ENCODE measurements at regions of chr19 and their contacts with region 1.

Region 1: DNA sequence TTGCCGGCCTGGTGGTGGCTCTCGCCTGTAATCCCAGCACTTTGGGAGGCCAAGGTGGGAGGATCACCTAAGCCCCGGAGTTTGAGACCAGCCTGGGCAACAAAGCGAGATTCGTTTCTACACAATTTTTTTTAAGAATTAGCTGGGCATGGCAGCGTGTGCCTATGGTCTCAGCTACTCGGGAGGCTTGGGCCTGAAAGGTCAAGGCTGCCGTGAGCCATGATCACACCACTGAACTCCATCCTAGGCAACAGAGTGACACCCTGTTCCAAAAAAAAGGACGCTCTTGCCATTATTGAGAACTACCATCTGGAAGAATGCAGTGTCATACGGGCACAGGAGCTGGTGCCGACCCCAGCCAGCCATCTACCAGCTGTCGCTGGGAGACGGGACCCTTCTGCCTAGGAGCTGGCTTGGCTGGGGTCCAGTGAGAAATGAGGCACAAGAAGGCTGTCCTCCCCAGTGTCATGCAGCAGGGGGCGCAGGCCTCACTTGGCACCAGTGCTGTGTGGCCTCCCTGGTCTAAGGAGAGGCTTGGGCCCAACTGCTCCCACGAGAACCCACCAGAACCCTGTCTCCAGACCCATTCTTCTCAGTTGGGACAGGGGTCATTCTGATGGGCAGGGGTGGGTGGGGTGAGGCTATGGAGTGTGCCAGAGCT is 12.2 kb upstream of the RELB start:
- DNase-seq: peak; percentile 86
- ATAC-seq: peak; percentile 91
- H3K4me3 Mint-ChIP-seq: no peak overlapping the region
- H3K27ac Mint-ChIP-seq: no peak overlapping the region
- H3K4me1 Mint-ChIP-seq: no peaks in the 10 kb centered on the region
- H3K27me3 Mint-ChIP-seq: no peaks in the 10 kb centered on the region
- CTCF ChIP-seq: peak; percentile 73

Region 2: DNA sequence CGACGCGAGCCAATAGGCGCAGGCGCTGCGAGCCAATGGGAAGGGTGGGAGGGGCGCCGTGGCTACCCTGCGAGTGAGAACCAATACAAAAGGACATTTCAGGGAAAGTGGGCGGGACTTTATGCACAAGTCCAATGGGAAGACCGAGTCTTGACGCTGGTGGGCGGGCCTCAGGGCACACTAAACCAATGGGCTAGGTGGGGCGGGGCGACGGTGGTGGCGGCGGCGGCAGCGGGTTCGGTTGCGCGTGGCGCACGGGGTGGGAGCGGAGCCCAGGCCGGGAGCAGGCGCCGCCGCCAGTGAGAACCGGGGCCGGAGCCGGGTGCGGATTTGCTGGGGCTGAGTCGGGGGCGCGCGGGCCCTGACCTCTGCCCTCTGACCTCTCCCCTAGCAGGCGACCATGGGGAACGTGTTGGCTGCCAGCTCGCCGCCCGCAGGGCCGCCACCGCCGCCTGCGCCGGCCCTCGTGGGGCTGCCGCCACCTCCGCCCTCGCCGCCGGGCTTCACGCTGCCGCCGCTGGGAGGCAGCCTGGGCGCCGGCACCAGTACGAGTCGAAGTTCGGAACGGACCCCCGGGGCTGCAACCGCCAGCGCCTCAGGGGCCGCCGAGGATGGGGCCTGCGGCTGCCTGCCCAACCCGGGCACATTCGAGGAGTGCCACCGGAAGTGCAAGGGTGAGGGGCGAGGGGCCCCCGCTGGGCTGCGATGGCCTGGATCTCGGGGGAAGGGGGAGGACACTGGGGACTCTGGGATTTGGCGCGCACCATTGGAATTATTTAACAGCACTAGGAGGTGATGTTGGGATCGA is 97.8 kb before region 1 on chr19 and contains the start of gene TOMM40:
- CTCF ChIA-PET with region 1: no interaction called
- POLR2A ChIA-PET with region 1: no interaction called
- DNase-seq: peak; percentile 65
- ATAC-seq: no peak
- H3K4me3 Mint-ChIP-seq: peak within 1 kb of the TSS; percentile 93
- H3K27ac Mint-ChIP-seq: peak within 1 kb of the TSS; percentile 97
- H3K4me1 Mint-ChIP-seq: peaks cover 21% of the 10 kb centered on the region
- H3K27me3 Mint-ChIP-seq: no peaks in the 10 kb centered on the region; the same call in 1 of the 2 replicates
- CTCF ChIP-seq: no peak
- total RNA-seq, gene TOMM40: 166 to 221 TPM (median 181 TPM) in 3 replicates

Region 3: GRCh38 chr19:45001087-45001739 is 12.2 kb after region 1 on chr19 and contains the start of gene RELB:
- CTCF ChIA-PET with region 1: interaction called, 16 read pairs
- POLR2A ChIA-PET with region 1: interaction called, 3 read pairs
- DNase-seq: peak; percentile 97
- ATAC-seq: peak; percentile 47
- H3K4me3 Mint-ChIP-seq: peak within 1 kb of the TSS; percentile 88
- H3K27ac Mint-ChIP-seq: peak within 1 kb of the TSS; percentile 97
- H3K4me1 Mint-ChIP-seq: peaks cover 6% of the 10 kb centered on the region; the same call in 1 of the 2 replicates
- H3K27me3 Mint-ChIP-seq: peaks cover 9% of the 10 kb centered on the region
- CTCF ChIP-seq: no peak
- total RNA-seq, gene RELB: 8.9 to 10.6 TPM (median 9.9 TPM) in 3 replicates

Region 4: GRCh38 chr19:45311621-45312020 is 322.6 kb after region 1 on chr19:
- CTCF ChIA-PET with region 1: no interaction called
- POLR2A ChIA-PET with region 1: no interaction called
- DNase-seq: no peak
- ATAC-seq: no peak
- H3K4me3 Mint-ChIP-seq: no peak overlapping the region
- H3K27ac Mint-ChIP-seq: no peak overlapping the region
- H3K4me1 Mint-ChIP-seq: peaks cover 3% of the 10 kb centered on the region
- H3K27me3 Mint-ChIP-seq: peaks cover 65% of the 10 kb centered on the region
- CTCF ChIP-seq: no peak

Measured in WTC11 (cell line).